GM12878 (cell line): ENCODE measurements at regions of chr16 and their contacts with region 1.

Region 1: DNA sequence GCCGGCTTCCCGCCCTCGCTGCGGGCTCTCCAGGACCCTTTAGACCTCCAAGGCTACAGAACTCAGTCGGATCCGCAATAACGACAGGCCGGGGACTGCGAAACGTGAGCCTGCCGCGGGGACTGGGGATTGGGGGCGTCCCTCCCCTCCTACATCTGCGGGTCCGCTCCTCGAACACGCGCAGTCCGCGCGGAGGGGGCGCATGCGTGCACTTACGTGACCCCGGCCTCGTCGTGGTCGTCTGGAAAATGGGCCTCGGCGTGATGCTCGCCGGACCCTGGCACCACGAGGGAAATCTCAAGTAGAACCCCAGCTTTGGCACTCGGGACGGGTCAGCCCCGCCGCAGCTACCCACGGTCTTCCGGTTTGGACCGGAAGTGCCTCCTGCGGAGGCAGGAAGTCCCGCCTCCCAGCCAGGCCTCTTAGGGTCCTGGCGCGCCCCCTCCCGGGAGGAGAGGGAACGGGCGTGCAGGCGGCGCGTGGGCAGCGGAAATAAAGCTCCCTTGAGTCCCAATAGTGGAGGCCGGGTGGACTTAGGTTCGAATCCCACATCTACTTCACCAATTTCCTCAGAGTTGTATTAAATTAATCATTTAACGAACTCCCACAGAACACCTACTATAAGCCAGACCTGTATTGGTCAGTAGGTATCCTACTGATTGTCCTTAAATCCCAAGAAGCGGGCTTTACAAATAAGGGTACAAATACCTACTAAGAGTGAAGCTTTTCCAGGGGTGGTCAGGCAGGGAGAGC is at the start of gene TAF1C:
- DNase-seq: peak; percentile 66
- ATAC-seq: peak; percentile 97
- H3K4me3 ChIP-seq: peak within 1 kb of the TSS; percentile 89
- H3K27ac ChIP-seq: peak within 1 kb of the TSS; percentile 86
- H3K4me1 ChIP-seq: no peaks in the 10 kb centered on the region
- H3K27me3 ChIP-seq: no peaks in the 10 kb centered on the region
- CTCF ChIP-seq: peak; percentile 94 to 99 (median 97); a peak in 5 of 6 replicates
- EP300 ChIP-seq: peak in 1 of 2 experiments; percentile 21; a peak in 1 of 4 replicates
- POLR2A ChIP-seq: peak; percentile 82
- RAD21 ChIP-seq: peak; percentile 84
- polyA plus RNA-seq, gene TAF1C: 0.98 to 2.0 TPM

Region 2: GRCh38 chr16:83952940-83953795 is 233.7 kb before region 1 on chr16 and contains the start of gene OSGIN1:
- CTCF ChIA-PET with region 1: interaction called, 6 read pairs
- POLR2A ChIA-PET with region 1: no interaction called
- RAD21 ChIA-PET with region 1: interaction called, 4 read pairs
- SMC1A ChIA-PET with region 1: no interaction called
- in situ Hi-C with region 1: loop called (anchors 5 kb)
- intact Hi-C with region 1: loop called (anchors 5 kb)
- DNase-seq: peak; percentile 25
- ATAC-seq: peak; percentile 91
- H3K4me3 ChIP-seq: 0 out of 2 replicates have a peak within 1 kb of the TSS, but pooled peaks have one; percentile 16
- H3K27ac ChIP-seq: no peak within 1 kb of the TSS
- H3K4me1 ChIP-seq: peaks cover 3% of the 10 kb centered on the region; the same call in 1 of the 2 replicates
- H3K27me3 ChIP-seq: no peaks in the 10 kb centered on the region
- CTCF ChIP-seq: no peak
- EP300 ChIP-seq: no peak
- POLR2A ChIP-seq: peak; percentile 57
- RAD21 ChIP-seq: no peak
- polyA plus RNA-seq, gene OSGIN1: not detected

Region 3: GRCh38 chr16:84116720-84117493 is 70.0 kb before region 1 on chr16 and contains the start of gene MBTPS1:
- CTCF ChIA-PET with region 1: interaction called, 23 read pairs
- POLR2A ChIA-PET with region 1: interaction called, 3 read pairs
- RAD21 ChIA-PET with region 1: interaction called, 4 read pairs
- SMC1A ChIA-PET with region 1: interaction called, 3 read pairs
- in situ Hi-C with region 1: no loop called
- intact Hi-C with region 1: no loop called
- DNase-seq: peak; percentile 91
- ATAC-seq: peak; percentile 95
- H3K4me3 ChIP-seq: peak within 1 kb of the TSS; percentile 93
- H3K27ac ChIP-seq: peak within 1 kb of the TSS; percentile 89
- H3K4me1 ChIP-seq: peaks cover 11% of the 10 kb centered on the region; the same call in 1 of the 2 replicates
- H3K27me3 ChIP-seq: no peaks in the 10 kb centered on the region
- CTCF ChIP-seq: 0 out of 6 replicates have a peak, but pooled peaks of 1 of the 3 experiments have one; percentile 20
- EP300 ChIP-seq: 0 out of 4 replicates have a peak, but pooled peaks of 1 of the 2 experiments have one; percentile 47
- POLR2A ChIP-seq: peak; percentile 93
- RAD21 ChIP-seq: no peak; the same call in 1 of the 2 replicates
- polyA plus RNA-seq, gene MBTPS1: 1.3 to 3.3 TPM

Region 4: DNA sequence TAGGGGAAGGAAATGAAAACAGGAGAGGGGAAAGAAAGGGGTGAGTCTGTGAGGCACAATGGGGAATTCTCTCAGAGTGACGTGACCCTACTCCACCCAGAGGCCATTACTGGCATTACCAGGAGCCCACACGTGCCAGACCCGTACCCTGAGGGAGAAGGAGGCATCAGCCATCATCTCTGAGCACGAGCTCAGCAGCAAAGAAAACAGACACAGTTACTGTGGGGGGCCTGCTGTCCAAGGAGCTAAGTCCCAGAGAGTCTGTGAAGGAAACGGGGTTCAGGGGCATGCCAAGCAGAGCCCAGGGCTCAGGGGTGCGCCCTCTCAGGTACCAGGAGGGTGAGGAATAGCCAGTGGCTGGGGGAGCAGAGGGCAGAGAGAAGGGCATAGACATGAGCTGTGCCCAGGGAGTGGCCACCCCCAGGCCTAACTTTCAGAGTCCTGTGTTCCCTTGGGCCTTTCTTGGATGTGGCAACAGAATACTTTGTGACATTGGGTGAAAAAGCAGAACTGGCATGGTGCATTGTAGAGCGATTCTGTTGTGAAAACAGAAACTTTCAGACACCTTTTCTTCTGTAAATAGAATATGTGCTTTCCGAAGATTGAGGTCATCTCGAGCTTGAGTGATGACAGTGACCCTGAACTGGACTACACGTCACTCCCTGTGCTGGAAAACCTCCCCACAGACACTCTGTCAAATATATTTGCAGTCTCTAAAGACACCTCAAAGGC is 11.3 kb before region 1 on chr16:
- CTCF ChIA-PET with region 1: interaction called, 30 read pairs
- POLR2A ChIA-PET with region 1: no interaction called
- RAD21 ChIA-PET with region 1: interaction called, 5 read pairs
- SMC1A ChIA-PET with region 1: interaction called, 4 read pairs
- in situ Hi-C with region 1: no loop called
- intact Hi-C with region 1: no loop called
- DNase-seq: peak; percentile 19
- ATAC-seq: peak; percentile 89
- H3K4me3 ChIP-seq: no peak overlapping the region
- H3K27ac ChIP-seq: no peak overlapping the region
- H3K4me1 ChIP-seq: peaks cover 13% of the 10 kb centered on the region
- H3K27me3 ChIP-seq: no peaks in the 10 kb centered on the region
- CTCF ChIP-seq: peak; percentile 70 to 75 (median 75)
- EP300 ChIP-seq: no peak
- POLR2A ChIP-seq: no peak
- RAD21 ChIP-seq: peak; percentile 68